ENCODE measurements at regions of chr11 and their contacts with region 1.

Region 1: DNA sequence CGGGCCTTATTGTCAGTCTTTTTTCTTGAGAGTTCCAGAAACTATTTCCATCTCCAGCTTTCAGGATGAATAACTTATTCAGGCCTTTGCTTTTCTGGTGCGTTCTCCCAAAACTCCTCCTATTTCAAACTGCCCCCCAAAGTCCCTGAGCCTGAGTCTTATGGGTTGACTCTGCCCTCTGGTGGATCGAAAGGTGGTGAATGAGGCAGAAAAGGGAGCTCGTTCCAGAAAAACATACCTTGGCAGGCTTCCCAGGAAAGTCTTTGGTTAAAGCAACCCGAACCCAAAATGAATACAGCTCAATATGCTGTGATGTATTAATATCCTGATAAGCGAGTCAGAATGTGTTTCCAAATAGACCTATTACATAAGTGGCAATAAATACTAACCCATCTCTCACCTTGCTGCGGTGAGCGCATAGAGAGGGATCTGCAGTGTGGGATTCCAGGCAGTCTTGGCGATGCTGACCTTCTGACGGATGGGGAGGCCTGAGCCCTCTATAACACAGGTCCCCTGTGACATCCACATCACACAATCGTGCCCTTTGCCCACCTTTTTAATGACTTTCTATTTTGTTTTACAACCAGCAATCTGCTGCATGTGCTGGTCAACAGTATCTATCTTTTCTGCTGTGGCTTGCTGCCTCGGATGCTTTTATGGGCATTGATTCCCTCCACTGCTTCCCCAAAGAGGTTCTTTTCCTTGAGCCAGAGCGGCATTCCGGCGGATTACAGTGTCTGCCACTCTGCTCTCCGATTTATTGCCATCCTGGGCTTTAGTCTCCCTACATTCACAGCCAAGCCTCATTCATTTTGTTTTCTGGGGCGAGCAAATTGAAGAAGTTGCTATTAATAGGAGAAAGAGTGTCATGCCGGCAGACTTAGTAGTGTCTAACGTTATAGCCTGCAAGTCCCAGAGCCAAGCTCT is 756.8 kb downstream of the NTM start:
- DNase-seq: peak; percentile 68
- H3K4me3 ChIP-seq: no peak overlapping the region
- CTCF ChIP-seq: peak; percentile 78

Region 2: DNA sequence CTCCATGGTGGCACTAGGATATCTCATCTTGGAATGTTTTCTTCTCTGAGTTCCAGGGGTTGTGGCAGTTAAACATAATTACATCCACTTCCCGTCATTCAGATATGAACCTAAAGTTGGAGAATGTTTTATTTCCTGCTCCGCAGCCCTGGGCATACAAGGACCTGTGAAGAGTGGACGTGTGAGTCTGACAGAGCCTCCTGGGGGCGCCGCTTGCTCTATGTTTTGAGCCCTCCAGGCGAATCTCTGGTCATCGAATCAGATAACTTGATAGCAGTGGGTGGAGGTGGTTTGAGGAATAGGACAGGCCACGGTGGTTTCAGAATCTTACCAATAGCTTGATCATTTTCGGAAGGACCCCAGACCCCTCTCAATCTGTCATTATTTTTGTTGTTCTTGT is 582.6 kb before region 1 on chr11:
- CTCF ChIA-PET with region 1: no interaction called
- POLR2A ChIA-PET with region 1: no interaction called
- DNase-seq: no peak
- H3K4me3 ChIP-seq: no peak overlapping the region
- CTCF ChIP-seq: no peak

Region 3: GRCh38 chr11:131688051-131688698 is 439.1 kb before region 1 on chr11:
- CTCF ChIA-PET with region 1: interaction called, 75 read pairs
- POLR2A ChIA-PET with region 1: interaction called, 3 read pairs
- DNase-seq: no peak
- H3K4me3 ChIP-seq: peak overlapping the region; percentile 43
- CTCF ChIP-seq: peak; percentile 96

Region 4: GRCh38 chr11:131867457-131868257 is 259.6 kb before region 1 on chr11:
- CTCF ChIA-PET with region 1: interaction called, 121 read pairs
- POLR2A ChIA-PET with region 1: interaction called, 5 read pairs
- DNase-seq: peak; percentile 47
- H3K4me3 ChIP-seq: no peak overlapping the region
- CTCF ChIP-seq: peak; percentile 90

Region 5: DNA sequence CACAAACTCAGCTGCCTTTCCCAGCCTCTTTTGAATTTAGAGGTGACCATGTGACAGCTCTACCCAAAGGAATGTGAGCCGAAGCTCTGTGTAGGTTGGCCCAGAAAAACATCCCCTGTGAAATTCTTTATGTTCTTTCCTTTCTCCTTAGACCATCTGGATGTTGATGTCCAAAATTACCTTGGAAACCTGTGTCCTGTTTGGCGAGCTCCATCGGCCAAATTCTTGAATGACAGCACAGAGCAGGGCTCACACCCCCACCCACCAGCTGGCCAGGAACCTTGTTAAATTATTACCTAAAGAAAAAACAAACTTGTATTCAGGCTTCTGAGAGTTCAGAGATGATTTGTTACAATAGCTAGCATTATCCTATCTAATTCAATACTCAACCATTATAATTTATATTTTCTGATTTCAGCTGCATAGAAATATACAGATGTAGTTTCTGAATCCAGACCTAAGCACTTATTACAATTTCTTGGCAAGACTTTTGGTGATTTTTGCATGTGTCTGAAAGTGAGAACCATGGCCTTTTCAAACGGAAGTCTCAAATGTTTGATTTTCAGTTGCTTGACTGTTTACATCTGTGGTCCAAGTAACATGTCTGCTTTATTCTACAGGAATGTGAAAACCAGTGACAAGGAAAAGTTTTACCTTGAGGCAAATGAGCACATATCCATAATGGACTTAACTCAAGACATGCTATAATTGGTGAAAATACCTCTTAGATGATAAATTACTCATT is 202.6 kb before region 1 on chr11:
- CTCF ChIA-PET with region 1: interaction called, 11 read pairs
- POLR2A ChIA-PET with region 1: no interaction called
- DNase-seq: no peak
- H3K4me3 ChIP-seq: no peak overlapping the region
- CTCF ChIP-seq: no peak

Region 6: DNA sequence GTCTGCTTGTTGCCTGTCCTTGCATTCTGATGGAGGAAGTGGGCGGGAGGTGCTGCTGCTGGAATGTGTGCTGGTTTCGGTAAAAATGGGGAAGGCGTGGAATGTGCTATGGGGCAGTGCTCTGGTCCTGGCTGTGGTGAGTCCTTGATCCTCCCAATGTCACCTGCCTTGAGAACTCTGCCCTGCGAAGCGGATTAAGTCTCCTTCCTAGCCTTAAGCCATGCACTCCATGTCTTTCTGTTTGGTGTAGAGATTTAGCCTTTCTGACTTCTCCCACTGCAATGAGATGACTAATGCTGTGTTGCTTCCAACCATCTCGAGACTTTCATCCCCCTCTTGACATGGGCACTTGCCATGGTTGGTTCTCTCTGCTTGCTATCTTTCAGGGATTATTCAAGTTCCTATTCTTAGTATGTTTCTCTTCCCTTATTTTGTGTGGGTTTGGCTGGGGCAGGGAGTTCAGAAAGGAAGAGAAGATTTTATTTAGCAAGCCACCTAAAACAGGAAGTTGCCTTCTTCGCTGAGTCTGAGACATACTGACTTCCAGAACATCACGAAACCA is 68.9 kb before region 1 on chr11:
- CTCF ChIA-PET with region 1: interaction called, 31 read pairs
- POLR2A ChIA-PET with region 1: interaction called, 16 read pairs
- DNase-seq: no peak
- H3K4me3 ChIP-seq: no peak overlapping the region
- CTCF ChIP-seq: no peak

Region 7: DNA sequence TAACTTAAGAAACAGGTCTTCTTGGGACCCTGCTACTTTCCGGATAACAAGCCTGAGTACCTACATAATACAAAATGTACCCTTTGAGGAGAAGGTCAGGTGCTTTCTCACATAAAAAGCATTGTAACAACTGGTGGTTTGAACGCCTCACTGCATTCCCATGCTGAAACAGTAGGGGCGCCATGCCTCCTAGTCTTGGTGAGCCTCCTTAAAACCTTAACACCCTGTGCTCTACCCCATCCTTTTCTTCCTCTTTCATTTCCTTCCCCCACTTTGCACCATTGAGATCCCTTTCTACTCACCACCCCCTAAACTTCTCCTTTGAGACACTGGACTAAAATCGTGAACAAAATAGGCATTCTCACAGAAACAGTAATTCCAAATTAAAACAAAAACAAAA is 27.5 kb before region 1 on chr11:
- CTCF ChIA-PET with region 1: interaction called, 19 read pairs
- POLR2A ChIA-PET with region 1: no interaction called
- DNase-seq: no peak
- H3K4me3 ChIP-seq: no peak overlapping the region
- CTCF ChIP-seq: peak; percentile 10